Activated naive CD4-positive, alpha-beta T cell treated with anti-CD3 and anti-CD28 coated beads for 36 hours (primary cell): ENCODE measurements at regions of chr7 and their contacts with region 1.

Region 1: DNA sequence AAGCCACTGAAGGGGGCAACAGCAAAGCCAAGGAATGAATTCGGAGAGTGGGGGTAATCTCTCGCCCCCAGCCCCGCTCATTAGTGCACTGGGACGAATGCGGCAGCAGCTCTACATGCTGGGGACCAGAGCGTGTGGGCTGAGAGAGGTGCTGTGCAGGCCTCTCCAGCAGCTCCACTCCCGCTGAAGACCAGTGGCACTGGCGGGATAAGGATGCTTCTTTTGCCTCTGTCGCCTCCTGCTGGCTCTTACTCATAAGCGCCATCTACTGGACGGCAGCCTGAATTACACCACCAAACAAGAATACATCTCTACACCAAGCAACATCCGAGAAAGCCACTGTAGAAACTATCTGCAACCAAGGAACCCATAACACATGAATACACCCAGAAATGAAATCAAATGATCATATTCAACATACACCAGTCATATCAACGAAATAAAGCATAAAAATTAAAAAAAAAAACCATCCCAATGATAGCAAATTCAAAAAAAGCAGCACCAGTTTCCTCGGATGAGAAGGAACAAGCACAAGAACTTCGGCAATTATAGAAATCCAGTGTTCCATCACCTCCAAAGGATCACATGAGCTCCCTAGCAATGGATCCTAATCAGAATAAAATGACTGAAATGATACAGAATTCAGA is 79.0 kb upstream of the TMEM168 start:
- DNase-seq: peak; percentile 70
- H3K4me3 Mint-ChIP-seq: no peak overlapping the region
- H3K27ac Mint-ChIP-seq: no peak overlapping the region
- H3K4me1 Mint-ChIP-seq: peaks cover 14% of the 10 kb centered on the region
- H3K27me3 Mint-ChIP-seq: no peaks in the 10 kb centered on the region

Region 2: GRCh38 chr7:112571852-112572607 is 297.2 kb before region 1 on chr7:
- CTCF ChIA-PET with region 1: interaction called, 3 read pairs
- intact Hi-C with region 1: loop called (anchors 5 kb)
- DNase-seq: peak; percentile 20
- H3K4me3 Mint-ChIP-seq: no peak overlapping the region
- H3K27ac Mint-ChIP-seq: no peak overlapping the region
- H3K4me1 Mint-ChIP-seq: peaks cover 12% of the 10 kb centered on the region
- H3K27me3 Mint-ChIP-seq: no peaks in the 10 kb centered on the region